Activated CD8-positive, alpha-beta T cell treated with anti-CD3 and anti-CD28 coated beads for 36 hours (primary cell): ENCODE measurements at regions of chr1 and their contacts with region 1.

Region 1: DNA sequence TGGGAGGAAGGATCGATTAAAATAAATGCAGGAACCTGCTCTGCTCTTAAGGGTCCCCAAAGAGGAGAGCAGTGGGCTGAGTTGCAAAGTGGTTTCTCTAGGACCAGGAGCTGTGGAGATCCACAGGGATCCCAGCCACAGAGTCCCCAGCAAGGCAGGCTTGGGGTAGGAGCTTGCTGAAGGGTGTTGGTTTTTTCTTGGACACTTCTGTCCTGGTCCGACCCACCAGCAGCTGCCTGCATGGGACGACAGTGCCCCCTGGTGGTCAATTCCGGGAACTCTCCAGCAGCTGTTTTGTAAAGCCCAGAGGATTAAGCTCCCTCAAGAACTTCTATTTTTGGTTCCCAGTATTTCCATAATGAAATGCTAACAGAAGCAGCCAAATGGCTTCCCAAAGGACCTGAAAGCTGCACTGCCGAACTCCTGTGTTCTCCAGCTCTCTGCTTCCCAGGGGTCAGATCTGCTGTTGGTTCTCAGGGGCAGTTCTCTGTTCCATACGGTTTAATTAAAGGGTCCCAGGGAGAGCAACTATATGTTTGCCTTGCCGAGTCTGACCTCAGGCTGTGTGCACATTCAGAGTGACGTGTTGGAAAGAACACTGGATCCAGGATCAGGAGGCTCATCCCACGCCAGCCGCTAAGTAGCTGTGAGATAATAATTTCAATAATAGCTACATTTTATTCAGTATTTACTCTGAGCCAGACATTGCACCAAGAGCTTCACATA is 23.2 kb downstream of the NENF start:
- DNase-seq: peak; percentile 91
- ATAC-seq: peak; percentile 78
- H3K4me3 Mint-ChIP-seq: no peak overlapping the region
- H3K27ac Mint-ChIP-seq: no peak overlapping the region
- H3K4me1 Mint-ChIP-seq: peaks cover 4% of the 10 kb centered on the region
- H3K27me3 Mint-ChIP-seq: no peaks in the 10 kb centered on the region
- CTCF ChIP-seq: peak; percentile 99

Region 2: GRCh38 chr1:211680752-211681327 is 775.1 kb before region 1 on chr1:
- CTCF ChIA-PET with region 1: interaction called, 76 read pairs
- POLR2A ChIA-PET with region 1: no interaction called
- intact Hi-C with region 1: loop called (anchors 5 kb)
- DNase-seq: peak; percentile 79
- ATAC-seq: peak; percentile 93
- H3K4me3 Mint-ChIP-seq: no peak overlapping the region
- H3K27ac Mint-ChIP-seq: peak overlapping the region; percentile 83
- H3K4me1 Mint-ChIP-seq: peaks cover 8% of the 10 kb centered on the region
- H3K27me3 Mint-ChIP-seq: no peaks in the 10 kb centered on the region
- CTCF ChIP-seq: peak; percentile 69

Region 3: DNA sequence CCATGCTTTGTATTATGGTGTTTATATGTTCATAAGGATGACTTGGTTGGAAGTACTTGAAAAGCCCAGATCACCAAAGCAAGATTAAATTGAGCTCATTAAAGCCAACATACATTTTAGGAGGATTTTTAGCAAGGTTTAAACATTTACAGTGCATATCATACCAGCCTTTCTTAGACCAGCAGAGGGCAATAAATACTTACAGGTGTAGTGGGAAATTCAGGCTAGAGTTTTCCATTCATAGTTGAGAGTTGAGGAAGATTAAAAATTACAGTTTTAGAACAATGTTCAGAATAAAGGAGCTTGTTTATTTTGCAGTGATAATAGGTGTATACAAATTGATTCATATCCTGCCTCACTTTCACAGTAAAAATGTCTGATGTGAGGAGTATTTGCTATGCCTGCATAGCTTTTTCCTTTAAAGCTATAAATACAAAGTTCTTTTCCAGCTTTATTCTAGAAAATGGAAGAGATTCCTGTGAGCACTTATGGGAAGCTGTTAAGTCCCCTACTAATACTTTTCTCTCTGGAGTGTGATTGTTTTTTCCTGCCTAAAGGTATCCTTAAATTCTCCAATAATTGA is 385.2 kb before region 1 on chr1:
- CTCF ChIA-PET with region 1: interaction called, 59 read pairs
- POLR2A ChIA-PET with region 1: no interaction called
- intact Hi-C with region 1: loop called (anchors 10 kb)
- DNase-seq: no peak
- ATAC-seq: peak; percentile 42
- H3K4me3 Mint-ChIP-seq: no peak overlapping the region
- H3K27ac Mint-ChIP-seq: no peak overlapping the region
- H3K4me1 Mint-ChIP-seq: no peaks in the 10 kb centered on the region
- H3K27me3 Mint-ChIP-seq: no peaks in the 10 kb centered on the region
- CTCF ChIP-seq: peak; percentile 36

Region 4: GRCh38 chr1:212135166-212135565 is 320.8 kb before region 1 on chr1:
- CTCF ChIA-PET with region 1: no interaction called
- POLR2A ChIA-PET with region 1: no interaction called
- intact Hi-C with region 1: no loop called
- DNase-seq: no peak
- ATAC-seq: no peak
- H3K4me3 Mint-ChIP-seq: no peak overlapping the region
- H3K27ac Mint-ChIP-seq: no peak overlapping the region
- H3K4me1 Mint-ChIP-seq: peaks cover 2% of the 10 kb centered on the region
- H3K27me3 Mint-ChIP-seq: no peaks in the 10 kb centered on the region
- CTCF ChIP-seq: no peak

Region 5: GRCh38 chr1:212375986-212376385 is 80.0 kb before region 1 on chr1:
- CTCF ChIA-PET with region 1: interaction called, 35 read pairs
- POLR2A ChIA-PET with region 1: no interaction called
- intact Hi-C with region 1: no loop called
- DNase-seq: no peak
- ATAC-seq: no peak
- H3K4me3 Mint-ChIP-seq: no peak overlapping the region
- H3K27ac Mint-ChIP-seq: no peak overlapping the region
- H3K4me1 Mint-ChIP-seq: no peaks in the 10 kb centered on the region
- H3K27me3 Mint-ChIP-seq: no peaks in the 10 kb centered on the region
- CTCF ChIP-seq: no peak

Region 6: GRCh38 chr1:212469701-212470458 is 13.9 kb after region 1 on chr1:
- CTCF ChIA-PET with region 1: interaction called, 36 read pairs
- POLR2A ChIA-PET with region 1: interaction called, 3 read pairs
- intact Hi-C with region 1: no loop called
- DNase-seq: no peak
- ATAC-seq: no peak
- H3K4me3 Mint-ChIP-seq: no peak overlapping the region
- H3K27ac Mint-ChIP-seq: no peak overlapping the region
- H3K4me1 Mint-ChIP-seq: peaks cover 9% of the 10 kb centered on the region
- H3K27me3 Mint-ChIP-seq: peaks cover 1% of the 10 kb centered on the region
- CTCF ChIP-seq: no peak

Region 7: DNA sequence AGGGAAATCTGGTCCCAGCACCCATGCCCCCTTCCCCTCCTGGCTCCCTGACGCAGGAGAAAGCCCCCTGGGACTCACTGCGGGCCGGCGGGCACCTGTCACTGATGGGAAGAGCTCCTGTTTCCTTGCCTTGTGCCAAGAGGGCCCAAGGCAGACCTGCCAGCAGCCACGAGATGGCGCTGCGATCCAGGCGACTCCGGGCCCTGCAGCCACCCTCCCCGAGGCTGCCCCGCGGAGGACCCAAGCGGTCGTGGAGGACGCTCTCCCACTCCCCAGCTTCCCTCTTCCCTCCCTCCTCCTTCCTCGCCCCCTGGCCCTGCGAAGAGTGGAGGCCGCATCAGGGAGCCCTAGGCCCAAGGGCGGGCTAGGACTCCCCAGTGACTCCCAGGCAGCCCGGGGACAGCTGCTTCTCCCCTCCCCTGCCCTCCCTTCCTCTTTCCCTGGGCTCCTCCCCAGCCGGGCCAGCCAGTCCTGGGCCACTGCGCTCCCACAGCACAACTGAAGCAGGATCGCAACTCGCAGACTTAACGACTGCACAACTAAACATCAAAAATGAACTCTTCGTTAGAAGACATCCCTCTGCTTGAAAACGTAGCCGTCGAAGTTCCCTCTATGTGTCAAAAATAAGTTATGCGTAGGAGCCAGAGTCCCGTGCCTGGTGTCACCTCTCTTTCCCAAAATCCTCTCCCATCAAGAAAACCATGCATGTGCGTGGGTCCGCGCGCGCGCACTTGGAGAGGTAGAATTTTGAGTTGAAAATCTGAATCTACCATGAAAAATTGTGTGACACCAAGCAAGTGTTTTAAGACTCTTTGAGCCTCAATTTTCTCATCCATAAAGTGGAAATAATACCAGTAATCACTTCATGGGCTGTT is 209.5 kb after region 1 on chr1:
- CTCF ChIA-PET with region 1: interaction called, 20 read pairs
- POLR2A ChIA-PET with region 1: no interaction called
- intact Hi-C with region 1: no loop called
- DNase-seq: peak; percentile 84
- ATAC-seq: peak; percentile 93
- H3K4me3 Mint-ChIP-seq: peak overlapping the region; percentile 59
- H3K27ac Mint-ChIP-seq: peak overlapping the region; percentile 63
- H3K4me1 Mint-ChIP-seq: peaks cover 16% of the 10 kb centered on the region
- H3K27me3 Mint-ChIP-seq: peaks cover 8% of the 10 kb centered on the region
- CTCF ChIP-seq: peak; percentile 95

Region 8: GRCh38 chr1:212760126-212760823 is 304.3 kb after region 1 on chr1:
- CTCF ChIA-PET with region 1: no interaction called
- POLR2A ChIA-PET with region 1: no interaction called
- intact Hi-C with region 1: no loop called
- DNase-seq: peak; percentile 76
- ATAC-seq: peak; percentile 96
- H3K4me3 Mint-ChIP-seq: no peak overlapping the region
- H3K27ac Mint-ChIP-seq: no peak overlapping the region
- H3K4me1 Mint-ChIP-seq: peaks cover 17% of the 10 kb centered on the region
- H3K27me3 Mint-ChIP-seq: no peaks in the 10 kb centered on the region
- CTCF ChIP-seq: peak; percentile 62